ENCODE measurements at regions of chr9 and their contacts with region 1.

Region 1: GRCh38 chr9:10268531-10269485 is 344.0 kb downstream of the PTPRD start:
- H3K4me3 ChIP-seq: no peak overlapping the region
- H3K27ac ChIP-seq: no peak overlapping the region
- H3K4me1 ChIP-seq: no peaks in the 10 kb centered on the region
- CTCF ChIP-seq: no peak

Region 2: DNA sequence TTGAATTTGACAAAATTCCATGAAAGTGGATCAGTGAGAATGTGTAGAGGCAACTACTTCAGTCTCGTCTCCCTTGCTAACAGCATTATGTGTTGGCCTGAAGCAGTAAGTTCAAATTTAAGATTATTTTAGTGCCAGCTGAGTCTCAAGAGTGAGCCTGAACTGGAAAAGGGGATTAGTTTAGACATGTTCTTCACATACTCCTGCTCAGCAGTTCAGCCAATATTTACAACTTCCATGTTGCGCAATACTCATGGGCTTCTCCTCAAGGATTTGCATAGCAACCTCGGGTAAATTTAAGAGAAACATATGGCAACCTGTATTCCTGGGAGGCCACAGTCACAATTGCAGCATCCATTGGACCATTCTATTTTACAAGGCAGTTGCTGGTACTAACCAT is 209.8 kb before region 1 on chr9:
- CTCF ChIA-PET with region 1: interaction called, 11 read pairs
- POLR2A ChIA-PET with region 1: no interaction called
- H3K4me3 ChIP-seq: no peak overlapping the region
- H3K27ac ChIP-seq: no peak overlapping the region
- H3K4me1 ChIP-seq: no peaks in the 10 kb centered on the region
- CTCF ChIP-seq: no peak

Region 3: DNA sequence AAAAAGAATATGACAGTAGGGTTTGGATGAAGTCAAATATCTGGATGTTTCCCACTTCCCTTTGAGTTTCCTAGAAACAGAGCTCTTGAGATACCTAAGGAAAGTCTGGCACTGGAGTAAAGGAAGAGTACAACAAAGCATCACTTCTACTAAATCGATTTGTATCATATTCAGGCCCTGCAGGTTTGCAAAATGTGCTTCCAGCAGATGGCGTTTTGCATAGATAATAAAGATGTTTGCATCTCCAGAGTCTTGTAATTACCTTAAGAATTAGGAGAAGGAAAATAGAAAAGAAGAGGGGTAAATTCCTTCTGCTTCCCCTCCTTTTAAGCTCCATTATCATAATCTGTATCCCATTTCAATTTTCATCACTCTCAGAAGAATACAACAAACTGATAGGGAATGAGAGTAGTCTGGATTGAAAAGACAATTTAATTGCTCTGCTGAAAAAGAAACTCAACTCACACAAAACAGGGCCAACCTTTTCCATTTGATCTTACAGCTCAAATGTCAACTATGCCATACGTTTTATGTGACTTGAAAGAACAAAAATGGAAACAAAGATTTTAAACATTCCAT is 36.4 kb before region 1 on chr9:
- CTCF ChIA-PET with region 1: interaction called, 14 read pairs
- POLR2A ChIA-PET with region 1: no interaction called
- H3K4me3 ChIP-seq: no peak overlapping the region
- H3K27ac ChIP-seq: no peak overlapping the region
- H3K4me1 ChIP-seq: no peaks in the 10 kb centered on the region
- CTCF ChIP-seq: no peak

Measured in HEK293 (cell line).